Cardiac septum (tissue), 1 donor: ENCODE measurements at regions of chr3 and their contacts with region 1.

Region 1: DNA sequence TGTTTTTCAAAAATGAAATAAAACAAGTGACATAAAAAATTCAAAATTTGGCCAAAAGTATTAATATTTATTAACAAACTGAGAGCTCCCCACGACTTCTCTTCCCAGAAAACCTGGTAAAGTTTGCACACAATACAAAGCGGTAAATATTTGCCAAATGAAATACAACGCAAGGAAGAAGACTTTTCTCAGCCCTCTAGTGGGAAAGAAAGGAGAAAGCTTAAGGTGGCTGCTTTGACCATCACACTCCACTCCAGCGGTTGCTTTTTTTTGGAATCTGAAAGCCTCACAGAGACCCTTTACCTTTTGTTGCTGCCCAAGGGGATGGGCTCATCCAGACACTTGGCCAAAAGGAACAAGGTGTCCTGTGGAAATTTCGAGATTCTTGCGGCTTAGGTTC is 1.1 kb upstream of the GK5 start:
- DNase-seq: no peak

Region 2: GRCh38 chr3:141959921-141960554 is 266.4 kb before region 1 on chr3:
- intact Hi-C with region 1: no loop called
- DNase-seq: no peak

Region 3: DNA sequence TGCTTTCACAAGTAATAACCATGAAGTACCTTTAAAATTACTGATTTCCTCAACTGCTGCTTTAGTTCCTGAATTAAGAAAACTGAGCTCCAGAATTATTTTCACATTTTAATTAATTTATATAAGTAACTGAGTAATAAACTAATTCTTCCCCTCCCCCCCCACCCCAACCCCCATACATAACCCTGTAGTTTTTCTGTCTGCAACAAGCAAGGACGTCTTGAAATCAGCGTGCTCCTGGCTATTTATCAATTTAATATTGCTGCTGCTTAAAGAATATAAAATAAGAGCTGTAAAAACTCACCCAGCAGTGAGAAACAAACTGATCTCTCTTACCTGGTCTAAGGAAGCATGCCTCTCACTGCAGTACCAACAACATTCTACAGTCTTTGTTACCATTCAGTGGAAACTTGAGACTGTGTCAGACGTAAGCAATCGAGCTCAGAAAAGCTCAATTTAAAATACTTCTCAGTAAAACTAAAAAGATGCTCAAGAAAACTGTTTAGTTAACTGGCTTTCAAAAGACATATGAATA is 198.2 kb before region 1 on chr3:
- intact Hi-C with region 1: loop called (anchors 10 kb)
- DNase-seq: no peak

Region 4: GRCh38 chr3:142148792-142149672 is 77.5 kb before region 1 on chr3 and contains the start of gene TFDP2:
- intact Hi-C with region 1: loop called (anchors 5 kb)
- DNase-seq: peak; percentile 96
- total RNA-seq, gene TFDP2: 56.4 TPM

Region 5: GRCh38 chr3:142447852-142448823 is 221.7 kb after region 1 on chr3 and contains the start of gene XRN1:
- intact Hi-C with region 1: loop called (anchors 5 kb)
- DNase-seq: peak; percentile 98
- total RNA-seq, gene XRN1: 24.5 TPM